ENCODE measurements at regions of chr14 and their contacts with region 1.

Region 1: DNA sequence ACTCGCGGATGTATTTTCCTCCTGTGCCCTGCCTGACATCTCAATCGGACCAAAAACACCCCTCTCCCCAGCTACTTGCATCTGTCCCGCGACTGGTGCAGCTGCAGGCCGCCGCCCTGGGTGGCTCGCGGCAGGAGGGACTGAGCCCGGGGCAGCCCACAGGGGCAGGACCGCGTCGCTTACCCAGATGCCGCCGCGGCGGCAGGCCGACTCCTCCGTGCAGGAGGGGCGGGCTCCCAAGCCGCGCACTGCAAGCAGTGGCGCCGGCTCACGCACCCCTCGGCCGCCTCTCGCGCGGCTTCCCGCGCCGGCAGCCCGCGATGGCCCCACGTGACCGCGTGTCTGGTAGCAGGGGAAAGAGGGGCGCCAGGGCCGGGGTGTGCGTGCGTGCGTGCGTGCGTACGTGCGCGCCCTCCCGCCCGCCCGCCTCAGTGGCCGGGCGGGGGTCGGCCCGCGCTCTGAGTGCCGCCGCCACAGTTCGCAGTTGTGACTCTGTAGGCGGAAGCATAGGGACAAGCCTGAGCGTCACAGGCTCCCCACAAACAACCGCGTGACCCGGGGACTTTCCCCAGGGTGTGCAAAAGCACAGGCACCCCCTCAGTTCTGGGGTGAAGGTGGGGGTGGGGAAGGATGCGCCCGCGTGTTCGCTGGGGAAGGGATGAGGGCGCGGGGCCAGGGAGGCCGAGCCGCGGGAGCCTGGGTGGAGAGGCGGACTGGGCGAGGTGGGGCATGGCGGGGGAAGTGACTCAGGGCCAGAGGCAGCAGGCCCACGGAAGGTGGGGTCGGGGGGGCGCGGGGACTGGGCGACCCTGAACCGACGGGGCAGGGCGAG is at the start of gene ZBTB25:
- DNase-seq: peak; percentile 97
- ATAC-seq: peak; percentile 66
- H3K4me3 Mint-ChIP-seq: peak within 1 kb of the TSS; percentile 98
- H3K27ac Mint-ChIP-seq: peak within 1 kb of the TSS; percentile 99
- H3K4me1 Mint-ChIP-seq: peaks cover 51% of the 10 kb centered on the region
- H3K27me3 Mint-ChIP-seq: no peaks in the 10 kb centered on the region
- total RNA-seq, gene ZBTB25: 32.7 to 40.0 TPM

Region 2: DNA sequence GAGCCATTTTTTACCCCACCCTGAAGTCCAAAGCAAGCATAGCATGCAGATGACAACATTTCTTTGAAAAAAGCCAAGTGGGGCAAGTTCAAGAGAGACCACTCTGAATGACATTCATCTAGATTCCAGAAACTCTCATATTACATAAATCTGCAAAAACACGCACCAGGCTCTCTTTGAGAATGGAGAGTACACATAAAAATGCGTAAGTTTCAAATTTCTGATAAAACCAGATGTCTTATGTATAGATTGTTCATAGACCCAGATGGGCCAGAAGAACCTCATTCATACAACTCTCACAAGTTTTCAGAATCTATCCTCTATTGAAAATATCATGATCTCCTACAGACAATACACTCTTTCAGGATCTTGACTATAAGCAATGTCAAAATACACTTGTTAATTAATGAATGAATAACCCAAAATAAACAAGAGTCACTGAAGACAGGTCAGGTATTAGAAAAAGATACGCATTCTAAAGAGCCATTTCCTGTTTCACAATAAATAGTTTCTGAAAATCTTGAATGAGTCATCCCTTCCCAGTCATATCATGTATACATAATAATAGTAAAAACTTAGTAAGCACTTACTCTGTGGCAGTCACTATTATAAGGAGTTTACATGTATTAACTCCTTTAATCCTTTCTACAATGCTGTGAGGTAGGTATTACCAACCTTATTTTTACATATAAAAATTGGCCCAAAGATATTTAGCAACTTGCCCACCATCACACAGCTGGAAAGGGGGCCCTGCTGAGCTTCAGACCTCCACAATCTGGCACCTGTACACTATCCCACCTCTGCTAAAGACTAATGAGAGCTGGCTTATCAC is 1032.5 kb before region 1 on chr14:
- CTCF ChIA-PET with region 1: no interaction called
- POLR2A ChIA-PET with region 1: no interaction called
- intact Hi-C with region 1: loop called in 1 of 2 experiments (anchors 10 kb)
- DNase-seq: no peak
- ATAC-seq: peak; percentile 87
- H3K4me3 Mint-ChIP-seq: no peak overlapping the region
- H3K27ac Mint-ChIP-seq: peak overlapping the region; percentile 55
- H3K4me1 Mint-ChIP-seq: peaks cover 59% of the 10 kb centered on the region
- H3K27me3 Mint-ChIP-seq: no peaks in the 10 kb centered on the region

Region 3: GRCh38 chr14:63727774-63728728 is 775.6 kb before region 1 on chr14 and contains the start of gene SGPP1:
- CTCF ChIA-PET with region 1: no interaction called
- POLR2A ChIA-PET with region 1: no interaction called
- intact Hi-C with region 1: loop called in 1 of 2 experiments (anchors 10 kb)
- DNase-seq: peak; percentile 87
- ATAC-seq: peak; percentile 91
- H3K4me3 Mint-ChIP-seq: peak within 1 kb of the TSS; percentile 99
- H3K27ac Mint-ChIP-seq: peak within 1 kb of the TSS; percentile 96
- H3K4me1 Mint-ChIP-seq: peaks cover 30% of the 10 kb centered on the region
- H3K27me3 Mint-ChIP-seq: no peaks in the 10 kb centered on the region
- total RNA-seq, gene SGPP1: 8.6 to 10.4 TPM

Region 4: DNA sequence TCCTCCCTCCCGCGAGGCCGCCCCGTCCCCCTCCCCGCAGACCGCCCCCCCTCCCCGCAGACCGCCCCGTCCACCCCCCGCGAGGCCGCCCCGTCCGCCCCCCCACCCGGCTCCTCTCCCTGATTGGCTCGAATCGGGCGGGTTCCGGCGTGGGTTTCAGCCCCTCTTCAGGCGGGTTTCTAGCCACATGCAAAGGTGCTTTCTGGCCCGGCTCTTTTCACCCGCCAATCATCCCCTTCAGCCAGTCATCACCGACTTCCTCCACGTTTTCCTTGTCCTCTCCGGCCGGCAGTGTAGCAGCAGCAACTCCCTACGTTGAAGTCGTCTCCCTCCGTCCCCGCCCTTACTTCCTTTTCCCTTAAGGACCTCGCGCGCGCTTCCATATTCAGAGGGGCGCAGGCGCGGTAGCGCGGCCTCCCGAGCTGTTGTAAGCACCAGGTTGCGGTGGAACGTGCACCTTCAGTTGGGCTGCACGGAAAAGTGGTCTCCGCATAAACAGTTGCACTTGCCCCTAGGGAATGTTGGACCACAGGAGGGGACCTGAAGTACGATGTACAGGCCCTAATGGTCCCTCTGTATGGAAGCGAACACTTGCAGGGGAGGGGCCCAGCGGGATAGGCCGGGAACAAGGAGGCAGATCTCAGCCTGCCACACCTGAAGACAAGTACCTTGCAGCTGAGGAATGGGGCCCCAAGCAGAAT is 164.9 kb before region 1 on chr14:
- CTCF ChIA-PET with region 1: interaction called, 20 read pairs
- POLR2A ChIA-PET with region 1: no interaction called
- intact Hi-C with region 1: loop called (anchors 1 to 2 kb)
- DNase-seq: peak; percentile 92
- ATAC-seq: peak; percentile 88
- H3K4me3 Mint-ChIP-seq: peak overlapping the region; percentile 93
- H3K27ac Mint-ChIP-seq: peak overlapping the region; percentile 87
- H3K4me1 Mint-ChIP-seq: peaks cover 18% of the 10 kb centered on the region
- H3K27me3 Mint-ChIP-seq: no peaks in the 10 kb centered on the region

Region 5: GRCh38 chr14:64478634-64479250 is 25.0 kb before region 1 on chr14:
- CTCF ChIA-PET with region 1: no interaction called
- POLR2A ChIA-PET with region 1: interaction called, 11 read pairs
- intact Hi-C with region 1: no loop called
- DNase-seq: no peak
- ATAC-seq: no peak
- H3K4me3 Mint-ChIP-seq: no peak overlapping the region
- H3K27ac Mint-ChIP-seq: no peak overlapping the region
- H3K4me1 Mint-ChIP-seq: peaks cover 37% of the 10 kb centered on the region
- H3K27me3 Mint-ChIP-seq: no peaks in the 10 kb centered on the region

Region 6: DNA sequence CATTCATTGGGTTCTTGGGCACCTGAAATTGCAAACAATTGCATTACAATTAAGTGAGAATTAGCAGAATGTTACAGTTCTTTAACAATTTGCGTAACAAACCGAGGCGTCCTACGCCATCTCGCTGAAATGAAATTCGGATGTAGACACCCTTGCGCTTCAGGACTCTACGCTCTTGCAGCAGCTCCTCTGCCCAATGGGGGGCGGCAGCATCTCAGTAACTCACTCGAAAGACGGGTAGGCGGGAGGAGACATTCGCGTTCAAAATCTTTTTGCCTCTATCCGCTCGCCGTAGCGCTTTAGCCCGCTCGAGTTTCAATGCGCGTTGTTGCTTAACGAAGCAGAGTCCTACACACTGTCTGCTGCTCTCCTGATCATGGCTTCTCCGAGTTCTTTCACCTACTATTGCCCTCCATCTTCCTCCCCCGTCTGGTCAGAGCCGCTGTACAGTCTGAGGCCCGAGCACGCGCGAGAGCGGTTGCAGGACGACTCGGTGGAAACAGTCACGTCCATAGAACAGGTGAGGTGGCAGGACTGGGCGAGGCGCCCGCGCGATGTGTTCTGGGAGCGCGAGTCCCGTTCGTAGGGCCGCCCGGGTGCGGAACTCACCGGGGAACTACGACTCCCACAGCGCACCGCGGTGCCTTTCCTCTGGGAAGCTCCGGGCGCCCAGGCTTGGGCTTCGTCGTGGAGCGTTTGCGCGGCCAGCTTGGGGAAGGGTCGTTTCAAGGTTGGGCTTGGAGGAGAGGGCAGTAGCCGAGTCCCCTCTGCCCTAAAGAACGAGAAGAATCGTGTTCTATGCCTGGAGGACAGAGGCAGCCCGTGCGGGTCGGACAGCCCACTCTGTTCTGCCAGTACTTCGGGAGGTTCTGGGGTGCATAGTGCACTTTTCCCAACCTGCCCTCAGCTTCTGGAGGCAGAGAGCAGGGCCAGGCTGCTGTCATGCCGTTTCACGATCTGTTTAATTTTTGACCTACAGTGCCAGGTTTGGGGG is 483.2 kb after region 1 on chr14 and contains the start of gene FNTB:
- CTCF ChIA-PET with region 1: no interaction called
- POLR2A ChIA-PET with region 1: no interaction called
- intact Hi-C with region 1: loop called in 1 of 2 experiments (anchors 2 kb)
- DNase-seq: peak; percentile 96
- ATAC-seq: peak; percentile 96
- H3K4me3 Mint-ChIP-seq: peak within 1 kb of the TSS; percentile 82
- H3K27ac Mint-ChIP-seq: peak within 1 kb of the TSS; percentile 99
- H3K4me1 Mint-ChIP-seq: peaks cover 46% of the 10 kb centered on the region
- H3K27me3 Mint-ChIP-seq: peaks cover 5% of the 10 kb centered on the region
- total RNA-seq, gene FNTB: 18.2 to 24.9 TPM

Measured in activated CD4-positive, alpha-beta T cell treated with anti-CD3 and anti-CD28 coated beads for 36 hours (primary cell).